MCF 10A (cell line): ENCODE measurements at regions of chr2 and their contacts with region 1.

Region 1: DNA sequence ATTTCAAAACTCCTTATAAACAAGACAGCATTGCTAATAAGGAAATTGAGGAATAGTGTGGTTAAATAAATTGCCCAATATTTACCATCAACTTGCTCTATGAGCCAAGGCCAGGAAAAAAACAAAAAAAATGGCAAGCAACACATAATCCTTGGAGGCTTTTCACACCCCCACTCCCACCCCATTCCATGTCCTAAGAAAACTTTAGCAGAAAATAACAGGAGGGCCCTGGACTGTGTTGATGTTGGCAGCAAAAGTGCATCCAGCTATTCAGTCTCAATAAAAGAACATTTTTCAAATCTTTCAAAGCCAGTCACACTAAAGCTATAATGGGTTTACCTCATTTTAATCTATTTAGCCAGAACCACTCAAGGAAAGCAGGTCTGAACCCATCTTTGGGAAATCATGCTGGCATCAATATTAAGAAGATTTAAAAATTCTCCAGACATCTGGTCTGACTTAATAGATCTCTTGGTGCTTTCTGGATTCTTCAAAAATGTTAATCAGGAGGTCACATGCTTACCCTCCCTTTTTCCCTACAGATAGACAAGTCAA is 34.6 kb upstream of the STK17B start:
- DNase-seq: peak; percentile 90
- H3K4me3 Mint-ChIP-seq: peak overlapping the region; percentile 10
- H3K27ac Mint-ChIP-seq: peak overlapping the region; percentile 2
- H3K4me1 Mint-ChIP-seq: peaks cover 30% of the 10 kb centered on the region
- H3K27me3 Mint-ChIP-seq: no peaks in the 10 kb centered on the region
- CTCF ChIP-seq: no peak

Region 2: DNA sequence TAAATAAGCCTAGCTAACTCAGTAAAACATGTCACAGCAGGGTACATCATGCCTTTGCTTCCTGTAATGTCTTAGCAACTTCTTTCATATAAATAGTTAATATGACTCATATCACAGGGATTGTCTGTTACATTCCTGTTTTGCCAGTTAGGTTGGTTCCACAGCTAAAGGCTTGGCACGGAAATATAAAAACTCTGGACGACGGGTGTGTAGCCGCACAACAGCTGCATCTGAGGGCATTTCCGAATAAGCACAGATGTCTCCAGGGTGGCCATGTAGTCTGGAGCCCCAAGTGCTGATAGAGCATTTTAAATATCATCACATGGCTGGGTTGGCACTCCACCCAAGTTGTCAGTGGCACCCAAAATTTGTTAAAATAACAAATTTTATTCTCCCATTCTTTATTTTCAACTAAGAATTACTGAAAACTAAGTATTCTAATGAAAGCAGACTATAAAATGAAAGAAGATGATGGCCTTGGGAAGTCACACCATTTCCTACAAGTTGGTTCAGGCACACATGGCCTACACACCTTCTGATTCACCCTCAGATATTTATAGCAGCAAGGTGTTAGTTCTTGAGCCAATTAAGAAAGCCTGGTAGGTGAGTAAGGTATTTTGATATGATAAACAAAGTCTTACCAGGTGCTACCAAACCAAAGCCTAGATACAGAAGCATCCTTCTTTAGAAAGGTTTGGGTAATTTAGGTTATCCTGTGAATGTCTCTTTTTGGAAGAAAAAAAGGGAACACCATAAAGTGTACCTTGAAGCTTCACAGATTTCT is 27.3 kb after region 1 on chr2:
- CTCF ChIA-PET with region 1: interaction called, 4 read pairs
- POLR2A ChIA-PET with region 1: interaction called, 30 read pairs
- intact Hi-C with region 1: no loop called
- DNase-seq: peak; percentile 87
- H3K4me3 Mint-ChIP-seq: peak overlapping the region; percentile 39
- H3K27ac Mint-ChIP-seq: peak overlapping the region; percentile 85
- H3K4me1 Mint-ChIP-seq: peaks cover 27% of the 10 kb centered on the region
- H3K27me3 Mint-ChIP-seq: no peaks in the 10 kb centered on the region
- CTCF ChIP-seq: no peak